Psoas muscle (tissue), 8 donors: ENCODE measurements at regions of chr18 and their contacts with region 1.

Region 1: GRCh38 chr18:32310101-32310500 is 120.3 kb downstream of the MEP1B start:
- DNase-seq: no peak
- ATAC-seq: no peak
- H3K4me3 ChIP-seq: no peak overlapping the region
- H3K27ac ChIP-seq: no peak overlapping the region
- H3K4me1 ChIP-seq: no peaks in the 10 kb centered on the region
- H3K27me3 ChIP-seq: no peaks in the 10 kb centered on the region
- CTCF ChIP-seq: no peak

Region 2: DNA sequence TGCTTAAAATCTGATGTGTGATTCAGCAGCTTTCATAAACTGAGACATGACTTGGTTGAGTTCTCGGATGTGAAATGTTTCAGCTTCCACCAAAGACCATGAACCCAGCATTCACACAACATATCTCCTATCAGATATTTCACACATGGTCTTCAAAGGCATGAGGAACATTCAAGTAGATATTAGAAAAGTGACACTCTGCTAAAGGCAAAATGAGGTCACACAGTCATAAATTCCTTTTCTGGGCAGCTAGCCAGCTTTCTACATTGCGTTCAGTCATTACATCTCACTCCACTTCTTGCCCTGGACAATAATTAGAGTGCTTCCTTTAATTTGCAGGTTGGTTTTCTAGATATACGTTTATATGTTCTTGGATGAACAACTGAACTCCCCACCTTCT is 63.9 kb after region 1 on chr18:
- intact Hi-C with region 1: loop called in 1 of 2 experiments (anchors 10 kb)
- DNase-seq: no peak
- ATAC-seq: peak; percentile 39 to 75 (median 62)
- H3K4me3 ChIP-seq: no peak overlapping the region
- H3K27ac ChIP-seq: no peak overlapping the region
- H3K4me1 ChIP-seq: peaks cover 27% of the 10 kb centered on the region
- H3K27me3 ChIP-seq: no peaks in the 10 kb centered on the region
- CTCF ChIP-seq: no peak

Region 3: DNA sequence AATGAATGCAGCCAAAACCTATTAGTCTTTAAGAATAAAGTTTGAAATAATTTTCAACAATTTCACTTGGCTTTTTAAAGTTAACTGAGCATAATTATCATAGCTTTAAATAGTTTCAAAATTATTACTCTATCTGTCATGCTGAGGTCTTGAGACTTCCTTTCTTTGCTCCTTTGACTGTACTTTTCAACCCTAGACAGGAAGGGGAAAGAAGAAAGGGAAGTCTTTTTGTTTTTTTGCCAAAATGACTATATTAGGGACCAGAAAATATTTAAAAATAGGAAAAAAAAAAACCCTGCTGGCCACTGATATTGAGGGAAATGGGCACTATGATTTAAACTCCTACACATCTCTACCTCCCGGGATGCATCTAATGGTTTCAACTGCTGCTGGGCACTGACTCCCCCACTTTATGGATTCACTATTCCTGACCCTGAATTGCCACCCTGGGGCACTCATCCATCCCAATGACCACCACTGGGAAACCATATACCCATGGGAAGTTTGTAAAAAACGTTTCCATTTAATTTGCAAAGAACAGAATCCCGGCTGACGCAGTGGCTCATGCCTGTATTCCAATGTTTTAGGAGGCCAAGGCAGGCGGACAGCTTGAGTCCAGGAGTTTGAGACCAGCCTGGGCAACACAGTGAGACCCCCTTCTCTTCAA is 110.1 kb after region 1 on chr18:
- intact Hi-C with region 1: no loop called
- DNase-seq: no peak
- ATAC-seq: no peak
- H3K4me3 ChIP-seq: no peak overlapping the region
- H3K27ac ChIP-seq: no peak overlapping the region
- H3K4me1 ChIP-seq: peaks cover 17% of the 10 kb centered on the region
- H3K27me3 ChIP-seq: no peaks in the 10 kb centered on the region
- CTCF ChIP-seq: no peak